Heart right ventricle (tissue), 16 donors: ENCODE measurements at regions of chr20 and their contacts with region 1.

Region 1: DNA sequence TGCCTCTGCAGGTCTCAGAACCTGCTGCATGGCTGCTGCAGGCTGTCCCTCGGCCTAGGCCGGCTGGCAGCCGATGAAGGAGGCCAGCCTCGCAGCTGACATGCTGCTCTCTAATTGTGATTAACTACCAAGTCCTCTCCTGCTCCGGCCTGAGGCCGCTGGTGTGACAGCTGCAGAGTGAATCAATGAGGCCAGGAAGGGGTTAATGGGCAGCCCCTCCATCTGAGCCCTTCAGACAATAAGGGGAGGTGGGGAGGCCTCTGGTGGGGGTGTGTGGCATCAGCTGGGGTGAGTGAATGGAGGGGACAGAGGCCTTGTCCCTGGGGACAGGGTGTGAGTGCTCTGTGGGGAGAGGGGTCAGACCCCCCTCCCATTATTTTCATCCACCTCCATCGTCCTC is 34.4 kb downstream of the SLC52A3 start:
- DNase-seq: no peak
- ATAC-seq: no peak
- H3K4me3 ChIP-seq: no peak overlapping the region
- H3K27ac ChIP-seq: no peak overlapping the region
- H3K4me1 ChIP-seq: peaks cover 0 to 3% (median under 1%) of the 10 kb centered on the region in 9 donors
- H3K27me3 ChIP-seq: peaks cover 0 to 23% (median 7%) of the 10 kb centered on the region in 7 donors
- CTCF ChIP-seq: no peak

Region 2: GRCh38 chr20:362271-363254 is 371.3 kb before region 1 on chr20:
- intact Hi-C with region 1: loop called in 4 of 10 experiments (anchors 5 to 10 kb)
- DNase-seq: peak; percentile 85 to 86
- ATAC-seq: peak; percentile 85 to 97 (median 92)
- H3K4me3 ChIP-seq: no peak overlapping the region
- H3K27ac ChIP-seq: no peak overlapping the region
- H3K4me1 ChIP-seq: peaks cover 0 to 10% (median 7%) of the 10 kb centered on the region in 9 donors
- H3K27me3 ChIP-seq: no peaks in the 10 kb centered on the region
- CTCF ChIP-seq: peak in 8 of 9 donors; percentile 13 to 60 (median 49)

Region 3: GRCh38 chr20:478949-479429 is 254.9 kb before region 1 on chr20:
- intact Hi-C with region 1: loop called in 1 of 10 experiments (anchors 10 kb)
- DNase-seq: peak in 1 of 2 donors; percentile 24
- ATAC-seq: peak in 6 of 8 donors; percentile 15 to 56 (median 42)
- H3K4me3 ChIP-seq: no peak overlapping the region
- H3K27ac ChIP-seq: no peak overlapping the region
- H3K4me1 ChIP-seq: peaks cover 0 to 20% (median 8%) of the 10 kb centered on the region in 9 donors
- H3K27me3 ChIP-seq: no peaks in the 10 kb centered on the region
- CTCF ChIP-seq: peak; percentile 43 to 76 (median 67)

Region 4: DNA sequence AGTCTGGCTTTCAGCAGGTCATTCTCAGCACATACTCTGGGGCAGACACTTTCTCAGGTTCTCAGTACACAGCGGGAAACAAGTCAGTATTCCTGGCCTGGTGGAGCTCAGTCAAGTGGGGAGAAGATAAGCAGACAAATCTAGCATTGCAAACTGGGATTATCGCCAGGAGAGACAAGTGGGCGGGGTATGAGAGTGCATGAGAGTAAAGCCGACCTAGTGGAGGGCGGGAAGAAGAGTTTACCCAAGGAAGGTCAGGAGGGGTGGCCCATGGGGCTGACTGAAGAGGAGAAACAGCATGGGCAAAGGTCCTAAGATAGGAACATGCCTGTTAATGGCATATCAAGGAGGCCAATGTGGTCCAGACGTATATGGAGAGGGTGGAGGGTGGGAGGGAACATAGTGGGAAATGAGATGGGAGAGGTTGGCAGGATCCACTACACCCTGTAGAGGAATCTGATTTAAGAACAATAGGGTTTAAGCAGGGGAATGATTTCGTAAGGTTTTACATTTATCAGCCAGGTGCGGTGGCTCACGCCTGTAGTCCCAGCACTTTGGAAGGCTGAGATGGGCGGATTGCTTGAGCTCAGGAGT is 177.8 kb before region 1 on chr20:
- intact Hi-C with region 1: loop called in 9 of 10 experiments (anchors 1 to 5 kb)
- DNase-seq: peak in 1 of 2 donors; percentile 75
- ATAC-seq: peak; percentile 75 to 96 (median 90)
- H3K4me3 ChIP-seq: no peak overlapping the region
- H3K27ac ChIP-seq: peak overlapping the region in 1 of 10 donors; percentile 9
- H3K4me1 ChIP-seq: peaks cover 0 to 16% (median 10%) of the 10 kb centered on the region in 9 donors
- H3K27me3 ChIP-seq: peaks cover 0 to 22% (median 0%) of the 10 kb centered on the region in 7 donors
- CTCF ChIP-seq: no peak

Region 5: GRCh38 chr20:571754-572441 is 162.0 kb before region 1 on chr20:
- intact Hi-C with region 1: loop called in 1 of 10 experiments (anchors 5 kb)
- DNase-seq: peak; percentile 86 to 90
- ATAC-seq: peak; percentile 71 to 79 (median 74)
- H3K4me3 ChIP-seq: peak overlapping the region in 6 of 10 donors; percentile 5 to 45 (median 30)
- H3K27ac ChIP-seq: peak overlapping the region; percentile 64 to 92 (median 82)
- H3K4me1 ChIP-seq: peaks cover 30 to 94% (median 74%) of the 10 kb centered on the region in 9 donors
- H3K27me3 ChIP-seq: peaks cover 0 to 45% (median 0%) of the 10 kb centered on the region in 7 donors
- CTCF ChIP-seq: no peak

Region 6: GRCh38 chr20:645318-646106 is 88.3 kb before region 1 on chr20:
- intact Hi-C with region 1: loop called in 4 of 10 experiments (anchors 5 kb)
- DNase-seq: peak; percentile 73 to 82
- ATAC-seq: peak; percentile 68 to 85 (median 82)
- H3K4me3 ChIP-seq: peak overlapping the region in 1 of 10 donors; percentile 6
- H3K27ac ChIP-seq: peak overlapping the region in 9 of 10 donors; percentile 1 to 67 (median 54)
- H3K4me1 ChIP-seq: peaks cover 2 to 34% (median 24%) of the 10 kb centered on the region in 9 donors
- H3K27me3 ChIP-seq: peaks cover 0 to 14% (median 0%) of the 10 kb centered on the region in 7 donors
- CTCF ChIP-seq: peak; percentile 90 to 99 (median 97)

Region 7: DNA sequence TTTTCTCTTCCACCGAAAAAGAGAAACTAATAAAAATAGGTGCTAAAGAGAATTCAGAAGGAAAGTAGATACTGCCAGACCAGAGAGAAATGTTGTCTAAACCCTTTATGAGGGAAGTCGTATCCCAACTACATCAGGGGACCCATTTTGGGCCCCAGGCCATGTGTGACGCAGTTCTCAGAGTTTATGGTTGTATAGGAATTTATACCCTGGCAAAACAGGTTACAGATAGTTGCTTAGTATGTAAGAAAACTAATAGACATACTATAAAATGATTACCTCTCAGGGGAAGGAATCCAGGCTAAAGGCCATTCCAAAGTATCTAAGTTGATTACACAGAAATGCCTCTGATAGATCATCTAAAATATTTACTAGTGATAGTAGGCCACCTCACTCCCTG is 63.1 kb after region 1 on chr20:
- intact Hi-C with region 1: no loop called
- DNase-seq: no peak
- ATAC-seq: no peak
- H3K4me3 ChIP-seq: no peak overlapping the region
- H3K27ac ChIP-seq: no peak overlapping the region
- H3K4me1 ChIP-seq: no peaks in the 10 kb centered on the region
- H3K27me3 ChIP-seq: peaks cover 0 to 11% (median 4%) of the 10 kb centered on the region in 7 donors
- CTCF ChIP-seq: no peak

Region 8: GRCh38 chr20:956330-956951 is 222.6 kb after region 1 on chr20:
- intact Hi-C with region 1: no loop called
- DNase-seq: peak; percentile 54 to 69
- ATAC-seq: peak; percentile 57 to 86 (median 80)
- H3K4me3 ChIP-seq: no peak overlapping the region
- H3K27ac ChIP-seq: no peak overlapping the region
- H3K4me1 ChIP-seq: peaks cover 0 to 4% (median 0%) of the 10 kb centered on the region in 9 donors
- H3K27me3 ChIP-seq: peaks cover 0 to 75% (median 66%) of the 10 kb centered on the region in 7 donors
- CTCF ChIP-seq: peak; percentile 90 to 99 (median 98)